Activated CD8-positive, alpha-beta T cell treated with anti-CD3 and anti-CD28 coated beads for 36 hours (primary cell): ENCODE measurements at regions of chr4 and their contacts with region 1.

Region 1: DNA sequence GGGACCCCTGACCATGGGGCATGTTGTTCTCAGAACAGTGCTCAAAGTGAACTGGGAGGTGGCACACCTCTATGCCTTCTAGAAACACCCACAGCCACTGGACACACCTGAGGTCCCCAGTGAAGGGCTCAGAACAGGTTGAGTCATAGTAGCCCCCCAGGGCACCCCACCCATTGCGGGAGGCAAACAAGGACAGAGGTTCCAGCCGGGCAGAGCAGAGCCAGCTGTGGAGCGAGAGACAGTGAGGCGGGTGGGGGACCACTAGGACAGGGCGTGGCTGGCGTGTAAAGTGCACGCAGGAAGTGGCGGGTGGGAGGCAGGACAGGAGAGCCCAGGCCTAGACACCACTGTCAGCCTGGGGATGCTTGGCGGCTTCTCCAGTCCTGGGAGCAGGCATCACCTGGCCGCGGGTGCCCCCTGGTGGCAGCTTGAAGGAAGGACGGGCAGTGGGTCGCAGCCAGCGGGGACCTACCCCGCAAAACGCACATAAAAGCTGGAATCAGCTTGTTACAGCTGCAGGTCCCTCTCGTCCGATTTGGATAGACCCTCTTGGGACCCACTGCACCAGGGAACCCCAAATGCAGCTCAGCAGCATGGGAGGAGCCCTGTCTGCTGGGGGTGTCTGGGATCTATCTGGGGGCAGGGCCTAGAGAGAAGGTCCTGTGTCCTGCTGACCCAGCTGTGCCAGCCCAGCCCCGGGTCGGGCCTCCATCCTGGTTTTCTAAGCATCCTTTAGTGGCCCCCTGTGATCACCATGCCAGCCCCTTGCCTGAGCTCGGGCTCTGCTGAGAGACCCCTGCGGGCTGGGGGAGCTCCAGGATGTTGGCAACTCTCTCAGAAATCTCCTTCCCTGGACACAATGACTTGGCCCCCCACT is 57.6 kb downstream of the WFS1 start:
- DNase-seq: peak; percentile 83
- ATAC-seq: peak; percentile 91
- H3K4me3 Mint-ChIP-seq: no peak overlapping the region
- H3K27ac Mint-ChIP-seq: no peak overlapping the region
- H3K4me1 Mint-ChIP-seq: no peaks in the 10 kb centered on the region
- H3K27me3 Mint-ChIP-seq: peaks cover 18% of the 10 kb centered on the region
- CTCF ChIP-seq: peak; percentile 89

Region 2: DNA sequence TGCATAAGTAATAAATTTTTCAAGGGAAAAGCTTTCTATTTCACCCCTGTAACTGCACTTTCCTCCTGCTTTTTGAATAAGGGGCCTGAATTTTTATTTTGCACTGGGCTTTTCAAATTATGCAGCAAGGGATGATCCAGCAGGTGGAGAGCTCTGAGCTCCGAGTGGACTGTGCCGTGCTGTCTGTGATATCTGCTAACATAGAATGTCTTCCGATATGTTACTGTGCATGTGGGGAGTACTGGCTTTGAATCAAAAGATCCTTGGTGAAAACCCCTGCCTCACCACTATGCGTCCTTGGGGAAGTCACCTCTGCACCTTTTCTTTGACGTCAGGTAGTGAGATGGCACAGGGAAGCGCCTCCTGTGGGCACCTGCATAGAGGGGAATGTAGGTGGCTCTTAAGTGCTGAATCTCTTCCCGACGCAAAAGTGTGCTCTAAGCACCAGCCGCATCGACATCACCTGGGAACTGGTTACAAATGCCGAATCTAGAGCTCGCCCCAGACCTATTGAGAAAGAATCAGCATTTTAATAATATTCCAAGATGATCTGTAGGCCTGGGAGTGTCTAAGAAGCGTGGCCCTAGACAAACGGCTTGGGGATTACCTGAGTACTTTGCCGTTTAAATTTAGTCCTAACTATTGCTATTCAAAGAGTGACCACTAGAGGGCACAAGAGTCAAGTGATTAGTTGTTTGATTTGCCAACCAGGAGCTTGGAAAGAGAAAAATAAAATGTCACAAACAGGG is 76.9 kb before region 1 on chr4:
- CTCF ChIA-PET with region 1: interaction called, 304 read pairs
- POLR2A ChIA-PET with region 1: no interaction called
- intact Hi-C with region 1: loop called (anchors 1 kb)
- DNase-seq: peak; percentile 10
- ATAC-seq: peak; percentile 55
- H3K4me3 Mint-ChIP-seq: no peak overlapping the region
- H3K27ac Mint-ChIP-seq: no peak overlapping the region
- H3K4me1 Mint-ChIP-seq: no peaks in the 10 kb centered on the region
- H3K27me3 Mint-ChIP-seq: peaks cover 25% of the 10 kb centered on the region
- CTCF ChIP-seq: no peak

Region 3: DNA sequence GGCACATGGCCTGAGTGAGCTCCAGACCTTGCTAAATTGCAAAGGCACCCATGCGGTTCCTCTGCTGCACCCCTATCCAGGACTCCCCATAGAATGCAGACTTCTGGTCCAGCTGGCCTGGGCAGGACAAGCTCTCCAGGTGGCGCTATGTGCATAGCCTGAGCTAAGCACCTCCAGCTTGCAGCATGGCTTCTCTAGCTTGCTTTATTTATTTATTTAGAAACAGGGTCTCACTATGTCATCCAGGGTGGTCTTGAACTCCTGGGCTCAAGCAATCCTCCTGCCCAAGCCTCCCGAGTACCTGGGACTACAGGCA is 63.1 kb before region 1 on chr4:
- CTCF ChIA-PET with region 1: interaction called, 22 read pairs
- POLR2A ChIA-PET with region 1: interaction called, 3 read pairs
- intact Hi-C with region 1: no loop called
- DNase-seq: peak; percentile 58
- ATAC-seq: no peak
- H3K4me3 Mint-ChIP-seq: no peak overlapping the region
- H3K27ac Mint-ChIP-seq: no peak overlapping the region
- H3K4me1 Mint-ChIP-seq: peaks cover 9% of the 10 kb centered on the region
- H3K27me3 Mint-ChIP-seq: peaks cover 19% of the 10 kb centered on the region
- CTCF ChIP-seq: peak; percentile 16

Region 4: DNA sequence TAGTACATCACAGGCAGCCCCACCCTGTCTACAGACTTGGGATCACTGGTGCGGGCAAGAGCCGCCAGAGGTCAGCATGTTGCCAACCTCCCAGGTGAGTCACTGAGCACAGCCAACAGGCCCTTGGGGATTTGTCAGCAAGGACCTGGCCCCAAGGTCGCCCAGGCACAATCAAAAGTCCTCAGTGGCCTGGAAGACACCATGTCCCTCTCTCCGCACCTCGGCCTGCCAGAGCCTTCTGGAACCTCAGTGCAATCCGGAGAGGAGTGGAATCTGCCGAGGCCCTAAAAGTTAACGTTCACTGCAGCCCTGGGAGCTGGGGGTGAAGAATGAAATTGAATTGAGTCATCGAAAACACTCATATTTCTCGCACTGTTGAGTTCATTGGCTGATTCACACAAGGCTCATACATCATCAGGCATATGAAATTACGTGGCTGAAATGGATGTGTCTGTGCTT is 16.7 kb after region 1 on chr4:
- CTCF ChIA-PET with region 1: interaction called, 14 read pairs
- POLR2A ChIA-PET with region 1: no interaction called
- intact Hi-C with region 1: no loop called
- DNase-seq: no peak
- ATAC-seq: no peak
- H3K4me3 Mint-ChIP-seq: no peak overlapping the region
- H3K27ac Mint-ChIP-seq: no peak overlapping the region
- H3K4me1 Mint-ChIP-seq: no peaks in the 10 kb centered on the region
- H3K27me3 Mint-ChIP-seq: peaks cover 21% of the 10 kb centered on the region
- CTCF ChIP-seq: no peak

Region 5: DNA sequence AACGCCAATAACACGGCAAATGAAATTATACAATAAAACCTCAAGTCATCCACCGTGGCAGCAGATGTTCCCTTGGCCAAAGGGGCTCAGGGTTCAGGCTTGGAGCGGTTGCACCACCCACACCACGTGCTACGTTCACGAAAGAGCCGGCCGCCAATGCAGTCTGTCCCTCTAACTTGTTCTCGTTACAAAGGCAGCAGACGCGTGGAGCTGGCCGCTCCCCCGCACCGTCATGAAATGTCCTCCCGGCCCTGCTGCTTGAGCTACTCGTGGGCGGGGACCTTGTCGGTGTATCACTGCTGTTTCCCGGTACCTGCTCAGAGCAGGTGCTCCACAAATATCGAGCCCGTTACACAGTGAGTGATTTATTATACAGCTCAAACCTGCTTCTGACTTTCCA is 211.3 kb after region 1 on chr4:
- CTCF ChIA-PET with region 1: no interaction called
- POLR2A ChIA-PET with region 1: no interaction called
- intact Hi-C with region 1: no loop called
- DNase-seq: no peak
- ATAC-seq: no peak
- H3K4me3 Mint-ChIP-seq: no peak overlapping the region
- H3K27ac Mint-ChIP-seq: no peak overlapping the region
- H3K4me1 Mint-ChIP-seq: no peaks in the 10 kb centered on the region
- H3K27me3 Mint-ChIP-seq: peaks cover 2% of the 10 kb centered on the region
- CTCF ChIP-seq: no peak